Heart left ventricle (tissue), 16 donors: ENCODE measurements at regions of chr2 and their contacts with region 1.

Region 1: GRCh38 chr2:164479460-164479859 is 141.8 kb downstream of the GRB14 start:
- DNase-seq: peak in 1 of 5 donors; percentile 15
- ATAC-seq: no peak
- H3K4me3 ChIP-seq: no peak overlapping the region
- H3K27ac ChIP-seq: no peak overlapping the region
- H3K4me1 ChIP-seq: no peaks in the 10 kb centered on the region
- H3K27me3 ChIP-seq: no peaks in the 10 kb centered on the region
- CTCF ChIP-seq: peak; percentile 15 to 59 (median 47)
- POLR2A ChIP-seq: no peak

Region 2: GRCh38 chr2:163182764-163183354 is 1296.6 kb before region 1 on chr2:
- intact Hi-C with region 1: loop called in 7 of 10 experiments (anchors 2 to 10 kb)
- DNase-seq: no peak
- ATAC-seq: no peak
- H3K4me3 ChIP-seq: no peak overlapping the region
- H3K27ac ChIP-seq: no peak overlapping the region
- H3K4me1 ChIP-seq: no peaks in the 10 kb centered on the region
- H3K27me3 ChIP-seq: peaks cover 0 to 9% (median 0%) of the 10 kb centered on the region in 9 donors
- CTCF ChIP-seq: peak; percentile 30 to 68 (median 56)
- POLR2A ChIP-seq: no peak

Region 3: GRCh38 chr2:163191372-163191771 is 1288.1 kb before region 1 on chr2:
- intact Hi-C with region 1: loop called in 5 of 10 experiments (anchors 5 to 10 kb)
- DNase-seq: no peak
- ATAC-seq: no peak
- H3K4me3 ChIP-seq: no peak overlapping the region
- H3K27ac ChIP-seq: no peak overlapping the region
- H3K4me1 ChIP-seq: no peaks in the 10 kb centered on the region
- H3K27me3 ChIP-seq: no peaks in the 10 kb centered on the region
- CTCF ChIP-seq: peak; percentile 36 to 69 (median 52)
- POLR2A ChIP-seq: no peak

Region 4: DNA sequence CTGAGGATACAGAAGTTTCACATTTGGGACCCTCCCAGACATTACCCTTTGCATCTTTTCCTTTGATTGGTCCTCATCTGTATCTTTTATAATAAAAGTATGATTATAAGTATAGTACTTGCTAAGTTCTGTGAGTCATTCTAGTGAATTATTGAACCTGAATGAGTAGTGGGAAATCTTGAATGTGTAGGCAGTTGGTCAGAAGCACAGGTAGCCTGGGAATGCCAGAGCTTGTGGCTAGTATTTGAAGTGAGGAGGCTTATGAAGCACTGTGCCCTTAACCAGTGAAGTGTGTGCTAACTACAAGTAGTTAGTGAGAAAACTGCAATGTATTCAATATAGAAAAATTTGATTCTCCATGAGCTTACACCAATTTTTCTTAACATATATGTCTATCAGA is 115.8 kb before region 1 on chr2:
- intact Hi-C with region 1: no loop called
- DNase-seq: no peak
- ATAC-seq: no peak
- H3K4me3 ChIP-seq: no peak overlapping the region
- H3K27ac ChIP-seq: no peak overlapping the region
- H3K4me1 ChIP-seq: no peaks in the 10 kb centered on the region
- H3K27me3 ChIP-seq: no peaks in the 10 kb centered on the region
- CTCF ChIP-seq: no peak
- POLR2A ChIP-seq: no peak

Region 5: GRCh38 chr2:164599966-164600589 is 120.6 kb after region 1 on chr2:
- intact Hi-C with region 1: no loop called
- DNase-seq: peak in 2 of 5 donors; percentile 20 to 28
- ATAC-seq: peak in 3 of 4 donors; percentile 78 to 93 (median 81)
- H3K4me3 ChIP-seq: no peak overlapping the region
- H3K27ac ChIP-seq: no peak overlapping the region
- H3K4me1 ChIP-seq: peaks cover 0 to 7% (median 0%) of the 10 kb centered on the region in 12 donors
- H3K27me3 ChIP-seq: no peaks in the 10 kb centered on the region
- CTCF ChIP-seq: peak; percentile 56 to 80 (median 71)
- POLR2A ChIP-seq: no peak